ENCODE measurements at regions of chr17 and their contacts with region 1.

Region 1: DNA sequence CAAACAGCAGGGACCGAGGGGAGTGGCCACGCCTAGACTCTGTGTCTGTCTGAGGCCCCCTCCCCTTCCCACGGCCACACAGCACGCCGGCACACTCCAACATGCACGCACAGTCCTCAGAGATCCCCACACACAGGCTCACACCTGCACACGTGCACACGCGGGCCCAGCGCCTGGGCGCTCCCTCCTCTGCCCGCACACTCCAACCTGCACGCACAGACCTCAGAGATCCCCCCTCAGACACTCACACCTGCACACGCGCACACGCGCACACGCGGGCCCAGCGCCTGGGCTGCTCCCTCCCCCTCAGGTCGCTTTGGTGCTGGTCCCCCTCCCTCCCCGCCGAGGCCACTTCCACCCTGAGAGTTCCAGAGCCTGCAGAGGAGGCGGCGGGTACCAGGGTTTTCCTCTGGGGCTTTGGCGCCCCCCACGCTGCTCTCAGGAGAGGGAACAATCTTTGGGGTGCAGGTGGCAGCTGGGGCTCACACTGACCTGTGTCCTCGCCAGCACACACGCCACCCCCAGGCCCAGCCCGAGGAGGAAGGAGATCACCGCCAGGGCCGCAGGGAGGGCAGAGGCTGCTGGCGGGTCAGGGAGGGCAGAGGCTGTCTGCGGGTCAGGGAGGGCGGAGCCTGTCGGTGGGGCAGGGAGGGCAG is 1.6 kb downstream of the CD7 start:
- DNase-seq: peak; percentile 44 to 83 (median 64)
- ATAC-seq: peak; percentile 59 to 60
- H3K4me3 Mint-ChIP-seq: peak overlapping the region in 6 of 10 donors; percentile 90 to 98 (median 98)
- H3K27ac Mint-ChIP-seq: peak overlapping the region in 6 of 10 donors; percentile 92 to 98 (median 94)
- H3K4me1 Mint-ChIP-seq: peaks cover 15 to 29% (median 26%) of the 10 kb centered on the region in 4 donors
- H3K27me3 Mint-ChIP-seq: peaks cover 0 to 2% (median 0%) of the 10 kb centered on the region in 5 donors

Region 2: GRCh38 chr17:82205719-82206508 is 109.9 kb before region 1 on chr17:
- POLR2A ChIA-PET with region 1: interaction called, 12 read pairs
- DNase-seq: peak; percentile 60 to 89 (median 75)
- ATAC-seq: peak; percentile 82 to 89
- H3K4me3 Mint-ChIP-seq: peak overlapping the region; percentile 1 to 78 (median 60)
- H3K27ac Mint-ChIP-seq: peak overlapping the region; percentile 92 to 99 (median 97)
- H3K4me1 Mint-ChIP-seq: peaks cover 12 to 46% (median 35%) of the 10 kb centered on the region in 4 donors
- H3K27me3 Mint-ChIP-seq: no peaks in the 10 kb centered on the region

Region 3: DNA sequence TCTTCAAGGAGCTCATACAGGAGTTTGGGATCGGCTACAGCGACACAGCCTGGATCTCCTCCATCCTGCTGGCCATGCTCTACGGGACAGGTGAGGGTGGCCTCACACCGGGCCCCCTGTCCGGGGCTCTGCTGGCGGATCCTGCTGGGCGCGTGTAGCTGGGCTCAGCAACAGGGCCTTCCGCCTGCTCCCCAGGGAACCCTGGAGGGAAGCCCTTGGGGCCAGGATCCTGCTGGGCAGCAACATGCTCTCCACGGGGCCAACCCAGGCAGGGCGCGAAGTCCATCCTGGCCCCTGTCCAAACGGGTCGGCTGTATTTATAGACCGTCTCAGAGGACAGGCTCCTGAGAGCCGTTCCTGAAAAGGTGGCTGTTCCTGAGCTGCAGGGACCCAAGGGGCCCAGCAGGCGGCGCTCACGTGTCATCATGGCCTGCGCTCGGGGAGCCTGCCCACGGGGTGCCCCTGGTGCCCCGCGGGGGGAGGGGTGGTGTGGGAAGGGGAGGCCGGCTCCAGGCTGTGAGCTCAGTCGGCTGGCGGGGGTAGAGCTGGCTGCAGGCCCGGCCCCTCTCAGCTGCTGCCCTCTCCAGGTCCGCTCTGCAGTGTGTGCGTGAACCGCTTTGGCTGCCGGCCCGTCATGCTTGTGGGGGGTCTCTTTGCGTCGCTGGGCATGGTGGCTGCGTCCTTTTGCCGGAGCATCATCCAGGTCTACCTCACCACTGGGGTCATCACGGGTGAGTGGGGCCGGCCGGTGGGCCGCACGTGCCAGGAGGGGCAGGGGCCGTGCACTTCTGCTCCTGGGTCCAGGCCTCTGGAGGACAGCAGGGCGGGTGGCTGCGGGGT is 79.5 kb before region 1 on chr17:
- POLR2A ChIA-PET with region 1: interaction called, 11 read pairs
- DNase-seq: peak; percentile 50 to 81 (median 69)
- ATAC-seq: peak; percentile 38 to 46
- H3K4me3 Mint-ChIP-seq: peak overlapping the region in 1 of 10 donors; percentile 29
- H3K27ac Mint-ChIP-seq: peak overlapping the region in 5 of 10 donors; percentile 15 to 77 (median 53)
- H3K4me1 Mint-ChIP-seq: peaks cover 16 to 52% (median 40%) of the 10 kb centered on the region in 4 donors
- H3K27me3 Mint-ChIP-seq: peaks cover 0 to 1% (median 0%) of the 10 kb centered on the region in 5 donors

Region 4: DNA sequence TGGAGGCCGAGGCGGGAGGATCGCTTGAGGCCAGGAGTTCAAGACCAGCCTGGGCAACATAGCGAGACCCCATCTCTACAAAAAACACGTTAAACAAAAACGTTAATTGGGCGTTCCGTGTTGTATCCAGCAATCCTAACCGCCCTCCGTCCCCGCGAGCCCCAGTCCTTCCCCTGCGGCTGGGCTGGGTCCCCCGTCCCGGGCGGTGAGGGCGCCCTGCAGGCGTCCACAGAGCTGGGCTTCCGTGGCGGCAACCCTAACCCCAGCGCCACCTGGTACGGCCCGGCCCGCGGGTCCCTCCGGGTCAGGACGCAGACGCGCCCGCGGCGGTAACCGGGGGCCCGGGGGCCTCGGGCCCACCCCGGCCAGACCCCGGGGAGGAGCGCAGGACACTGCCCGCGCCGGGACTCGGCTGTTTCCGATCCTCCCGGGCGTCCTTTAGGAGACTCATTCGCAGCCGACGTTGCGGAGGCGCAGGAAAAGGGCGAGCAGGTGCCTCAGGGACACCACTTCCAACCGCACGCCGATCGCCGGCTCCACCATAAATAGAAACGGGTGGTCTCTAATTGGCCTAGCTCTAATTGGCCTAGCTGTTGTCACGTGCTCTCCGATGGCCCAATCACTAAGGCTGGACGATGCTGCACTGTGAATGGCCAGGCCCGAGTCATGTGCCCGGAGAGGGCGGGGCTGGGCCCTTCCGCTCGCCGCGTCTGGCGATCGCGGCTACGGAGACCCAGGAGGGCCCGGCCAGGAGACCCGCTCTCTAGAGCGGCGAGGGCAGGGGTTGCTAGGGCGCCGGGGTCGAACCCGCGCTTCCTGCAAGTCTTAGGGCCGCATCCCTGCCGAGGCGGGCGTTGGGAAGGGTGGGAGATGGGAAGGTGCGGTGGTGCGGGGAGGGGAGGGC is 23.3 kb before region 1 on chr17:
- POLR2A ChIA-PET with region 1: interaction called, 344 read pairs
- DNase-seq: peak; percentile 83 to 97 (median 91)
- ATAC-seq: peak; percentile 91
- H3K4me3 Mint-ChIP-seq: peak overlapping the region; percentile 82 to 93 (median 88)
- H3K27ac Mint-ChIP-seq: peak overlapping the region; percentile 71 to 96 (median 94)
- H3K4me1 Mint-ChIP-seq: peaks cover 27 to 46% (median 43%) of the 10 kb centered on the region in 4 donors
- H3K27me3 Mint-ChIP-seq: no peaks in the 10 kb centered on the region

Region 5: GRCh38 chr17:82434216-82434565 is 118.4 kb after region 1 on chr17:
- POLR2A ChIA-PET with region 1: no interaction called
- DNase-seq: peak in 4 of 10 donors; percentile 18 to 33 (median 24)
- ATAC-seq: peak; percentile 72 to 75
- H3K4me3 Mint-ChIP-seq: peak overlapping the region in 1 of 10 donors; percentile 19
- H3K27ac Mint-ChIP-seq: peak overlapping the region in 6 of 10 donors; percentile 24 to 74 (median 32)
- H3K4me1 Mint-ChIP-seq: peaks cover 8 to 43% (median 22%) of the 10 kb centered on the region in 4 donors
- H3K27me3 Mint-ChIP-seq: no peaks in the 10 kb centered on the region